ENCODE measurements at regions of chr15 and their contacts with region 1.

Region 1: GRCh38 chr15:90482124-90483011 is 47.4 kb upstream of the CRTC3 start:
- DNase-seq: peak; percentile 11
- H3K4me3 Mint-ChIP-seq: no peak overlapping the region
- H3K27ac Mint-ChIP-seq: peak overlapping the region; percentile 13
- H3K4me1 Mint-ChIP-seq: peaks cover 43% of the 10 kb centered on the region
- H3K27me3 Mint-ChIP-seq: no peaks in the 10 kb centered on the region

Region 2: DNA sequence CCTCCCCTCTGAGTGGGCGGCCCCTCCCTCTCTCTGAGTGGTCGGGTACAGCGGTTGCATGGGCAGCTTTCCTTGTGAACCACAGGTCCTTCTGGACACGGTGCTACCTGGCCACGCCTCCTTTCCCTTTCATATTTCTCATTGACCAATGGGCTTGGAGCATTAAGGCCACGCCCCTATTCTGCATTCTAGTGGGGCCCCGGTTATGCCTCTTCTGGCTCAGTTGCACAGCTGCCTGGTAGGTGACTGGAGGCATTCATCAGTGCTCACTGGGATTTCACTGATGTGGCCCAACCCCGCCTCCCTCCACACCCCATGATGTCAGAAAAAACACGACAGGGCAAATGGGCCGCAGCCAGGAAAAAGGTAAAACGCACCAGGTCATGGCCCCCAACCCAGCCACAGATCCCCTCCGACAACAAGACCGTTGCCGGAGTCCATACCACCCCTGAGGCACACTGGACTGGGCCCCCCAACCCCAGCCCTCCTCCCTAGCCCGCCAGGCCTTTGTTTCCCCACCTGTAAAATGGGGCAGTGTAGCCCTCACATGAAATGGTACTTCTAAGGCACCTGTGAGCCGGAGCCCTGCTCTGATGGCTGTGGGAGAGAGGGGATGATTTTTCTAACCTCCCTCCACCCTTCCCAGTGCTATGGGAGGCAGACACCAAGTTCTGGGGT is 190.6 kb before region 1 on chr15:
- intact Hi-C with region 1: loop called (anchors 1 kb)
- DNase-seq: no peak
- H3K4me3 Mint-ChIP-seq: no peak overlapping the region
- H3K27ac Mint-ChIP-seq: no peak overlapping the region
- H3K4me1 Mint-ChIP-seq: peaks cover 6% of the 10 kb centered on the region
- H3K27me3 Mint-ChIP-seq: peaks cover 19% of the 10 kb centered on the region

Region 3: GRCh38 chr15:90449206-90449735 is 33.1 kb before region 1 on chr15:
- intact Hi-C with region 1: loop called (anchors 5 kb)
- DNase-seq: no peak
- H3K4me3 Mint-ChIP-seq: no peak overlapping the region
- H3K27ac Mint-ChIP-seq: no peak overlapping the region
- H3K4me1 Mint-ChIP-seq: no peaks in the 10 kb centered on the region
- H3K27me3 Mint-ChIP-seq: no peaks in the 10 kb centered on the region

Region 4: DNA sequence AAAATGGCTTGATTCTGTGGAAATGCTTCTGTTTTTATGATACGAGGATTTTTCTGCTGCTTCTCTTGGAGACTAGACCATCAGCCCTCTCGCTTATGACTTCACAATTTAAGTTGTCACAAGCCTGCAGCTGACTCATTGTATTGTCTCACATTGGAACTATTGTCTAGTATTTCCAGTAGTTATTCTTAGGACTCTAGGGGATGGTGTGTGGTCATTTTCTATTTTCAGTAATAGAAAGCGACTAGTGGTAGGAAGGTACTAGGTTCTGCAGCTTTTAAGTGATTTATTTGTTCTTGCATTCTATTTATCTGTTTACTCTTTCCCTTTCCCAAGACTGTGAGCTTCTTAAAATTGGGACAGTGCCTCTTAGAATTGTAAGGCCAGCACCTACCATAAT is 19.0 kb before region 1 on chr15:
- intact Hi-C with region 1: no loop called
- DNase-seq: no peak
- H3K4me3 Mint-ChIP-seq: no peak overlapping the region
- H3K27ac Mint-ChIP-seq: peak overlapping the region; percentile 3
- H3K4me1 Mint-ChIP-seq: peaks cover 34% of the 10 kb centered on the region
- H3K27me3 Mint-ChIP-seq: no peaks in the 10 kb centered on the region

Measured in activated T-helper 1 cell treated with anti-CD3 and anti-CD28 coated beads, Interleukin-12 subunit alpha, Interleukin-12 subunit beta, Interleukin-2, Interleukin-4 antibody, amounts not matched to agents 30 ng/mL and 10 ng/mL and 1 ng/mL, durations not matched to agents 14 hours and 24 hours and 36 hours (primary cell).